ENCODE measurements at regions of chr3 and their contacts with region 1.

Region 1: GRCh38 chr3:143119009-143119914 is at the start of gene CHST2:
- H3K4me3 Mint-ChIP-seq: peak within 1 kb of the TSS; percentile 84
- H3K27ac Mint-ChIP-seq: peak within 1 kb of the TSS; percentile 80
- H3K4me1 Mint-ChIP-seq: peaks cover 29% of the 10 kb centered on the region
- H3K27me3 Mint-ChIP-seq: peaks cover 21% of the 10 kb centered on the region

Region 2: GRCh38 chr3:142866841-142867631 is 252.2 kb before region 1 on chr3:
- intact Hi-C with region 1: no loop called
- H3K4me3 Mint-ChIP-seq: no peak overlapping the region
- H3K27ac Mint-ChIP-seq: no peak overlapping the region
- H3K4me1 Mint-ChIP-seq: peaks cover 18% of the 10 kb centered on the region
- H3K27me3 Mint-ChIP-seq: no peaks in the 10 kb centered on the region

Region 3: DNA sequence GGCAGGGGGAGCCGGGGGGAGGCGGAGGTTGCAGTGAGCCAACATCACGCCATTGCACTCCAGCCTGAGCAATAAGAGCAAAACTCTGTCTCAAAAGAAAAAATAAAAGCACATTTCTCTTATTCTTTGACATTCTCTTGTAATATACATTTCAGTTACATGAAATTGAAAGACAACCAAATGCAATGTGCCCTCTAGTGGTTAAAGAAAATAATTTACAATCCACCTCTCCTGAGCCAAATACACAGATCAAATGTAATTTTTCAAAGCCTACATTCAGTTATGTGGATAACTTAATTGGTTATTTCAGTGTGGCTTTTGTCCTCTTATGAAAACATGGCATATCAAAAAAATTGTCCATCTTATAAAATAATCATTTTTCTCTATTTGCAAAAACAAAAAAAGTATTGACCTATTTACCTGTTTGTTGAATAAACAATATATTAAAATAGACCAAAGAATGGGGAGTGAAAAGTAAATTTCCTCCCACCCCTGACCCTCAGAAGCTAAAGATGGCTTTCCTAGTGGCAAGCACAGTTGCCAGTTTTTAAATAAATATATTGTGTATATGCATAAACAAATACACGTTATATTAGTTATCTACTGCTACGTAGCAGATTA is 132.1 kb before region 1 on chr3:
- intact Hi-C with region 1: no loop called
- H3K4me3 Mint-ChIP-seq: no peak overlapping the region
- H3K27ac Mint-ChIP-seq: no peak overlapping the region
- H3K4me1 Mint-ChIP-seq: no peaks in the 10 kb centered on the region
- H3K27me3 Mint-ChIP-seq: no peaks in the 10 kb centered on the region

Region 4: DNA sequence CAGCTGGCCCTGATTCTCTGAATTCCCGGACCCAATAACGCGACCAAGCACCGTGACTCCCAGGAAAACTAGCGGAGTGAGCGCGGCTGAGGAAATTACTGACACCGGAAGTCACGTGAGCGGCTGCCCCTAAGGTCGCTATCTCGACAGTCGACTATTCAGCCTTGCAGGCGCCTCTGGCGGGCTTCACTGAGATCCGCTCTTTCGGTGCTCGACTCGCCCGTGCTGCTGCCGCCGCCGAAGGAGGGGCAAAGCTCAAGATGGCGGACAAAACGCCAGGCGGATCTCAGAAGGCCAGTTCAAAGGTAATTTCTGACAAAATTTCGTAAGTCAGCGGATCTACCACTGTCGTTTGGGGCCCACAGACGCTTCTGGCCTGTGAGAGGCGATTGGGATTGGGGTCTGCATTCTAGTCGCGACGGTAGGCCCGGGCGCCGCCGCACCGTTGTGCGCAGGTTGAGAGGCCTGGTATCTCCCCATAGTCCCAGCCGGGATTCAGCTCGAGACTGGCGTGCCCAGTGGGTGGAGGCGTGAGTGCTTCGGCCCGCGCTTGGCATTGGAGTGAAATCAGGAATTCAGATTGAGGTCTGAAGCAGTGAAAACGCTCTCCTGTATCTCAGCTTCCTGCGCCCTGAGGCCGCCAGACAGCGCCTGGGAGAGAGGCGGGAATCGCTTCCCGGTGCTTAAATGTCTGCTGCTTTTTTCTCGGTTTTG is 117.7 kb before region 1 on chr3 and contains the start of gene U2SURP:
- intact Hi-C with region 1: no loop called
- H3K4me3 Mint-ChIP-seq: peak within 1 kb of the TSS; percentile 81
- H3K27ac Mint-ChIP-seq: peak within 1 kb of the TSS; percentile 97
- H3K4me1 Mint-ChIP-seq: peaks cover 32% of the 10 kb centered on the region
- H3K27me3 Mint-ChIP-seq: no peaks in the 10 kb centered on the region

Region 5: GRCh38 chr3:143163562-143164100 is 44.4 kb after region 1 on chr3:
- intact Hi-C with region 1: loop called (anchors 5 kb)
- H3K4me3 Mint-ChIP-seq: no peak overlapping the region
- H3K27ac Mint-ChIP-seq: peak overlapping the region; percentile 82
- H3K4me1 Mint-ChIP-seq: peaks cover 50% of the 10 kb centered on the region
- H3K27me3 Mint-ChIP-seq: no peaks in the 10 kb centered on the region

Region 6: DNA sequence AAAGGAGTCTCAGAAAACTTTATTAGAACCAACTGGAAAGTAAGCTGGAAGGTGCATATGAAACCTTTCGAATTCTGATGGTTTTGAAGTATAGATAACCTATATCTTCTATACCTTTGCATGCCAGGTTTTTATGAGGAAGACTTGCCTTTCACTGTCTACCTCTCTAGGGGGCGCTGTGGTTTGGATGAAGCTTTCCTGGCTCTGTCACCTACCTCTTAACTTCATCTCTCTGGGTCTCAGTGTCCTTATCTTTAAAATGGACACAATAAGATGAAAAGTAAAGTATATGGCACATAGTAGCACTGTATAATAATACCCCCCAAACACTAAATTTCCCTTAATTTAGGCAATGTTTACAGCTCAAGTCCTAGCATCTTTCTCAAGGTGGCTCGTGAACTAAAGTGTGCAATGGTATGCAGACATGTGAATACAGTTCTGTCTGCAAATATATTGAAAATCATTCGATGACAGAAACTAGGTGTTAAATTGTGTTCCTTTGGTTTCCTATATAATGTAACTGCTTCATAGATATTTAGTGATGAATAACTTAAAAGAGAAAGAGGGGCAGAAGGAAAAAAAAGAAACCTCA is 314.6 kb after region 1 on chr3:
- intact Hi-C with region 1: loop called (anchors 10 kb)
- H3K4me3 Mint-ChIP-seq: no peak overlapping the region
- H3K27ac Mint-ChIP-seq: no peak overlapping the region
- H3K4me1 Mint-ChIP-seq: peaks cover 26% of the 10 kb centered on the region
- H3K27me3 Mint-ChIP-seq: no peaks in the 10 kb centered on the region

Region 7: GRCh38 chr3:143644370-143645089 is 525.3 kb after region 1 on chr3:
- intact Hi-C with region 1: loop called (anchors 5 kb)
- H3K4me3 Mint-ChIP-seq: no peak overlapping the region
- H3K27ac Mint-ChIP-seq: no peak overlapping the region
- H3K4me1 Mint-ChIP-seq: peaks cover 5% of the 10 kb centered on the region
- H3K27me3 Mint-ChIP-seq: no peaks in the 10 kb centered on the region

Region 8: DNA sequence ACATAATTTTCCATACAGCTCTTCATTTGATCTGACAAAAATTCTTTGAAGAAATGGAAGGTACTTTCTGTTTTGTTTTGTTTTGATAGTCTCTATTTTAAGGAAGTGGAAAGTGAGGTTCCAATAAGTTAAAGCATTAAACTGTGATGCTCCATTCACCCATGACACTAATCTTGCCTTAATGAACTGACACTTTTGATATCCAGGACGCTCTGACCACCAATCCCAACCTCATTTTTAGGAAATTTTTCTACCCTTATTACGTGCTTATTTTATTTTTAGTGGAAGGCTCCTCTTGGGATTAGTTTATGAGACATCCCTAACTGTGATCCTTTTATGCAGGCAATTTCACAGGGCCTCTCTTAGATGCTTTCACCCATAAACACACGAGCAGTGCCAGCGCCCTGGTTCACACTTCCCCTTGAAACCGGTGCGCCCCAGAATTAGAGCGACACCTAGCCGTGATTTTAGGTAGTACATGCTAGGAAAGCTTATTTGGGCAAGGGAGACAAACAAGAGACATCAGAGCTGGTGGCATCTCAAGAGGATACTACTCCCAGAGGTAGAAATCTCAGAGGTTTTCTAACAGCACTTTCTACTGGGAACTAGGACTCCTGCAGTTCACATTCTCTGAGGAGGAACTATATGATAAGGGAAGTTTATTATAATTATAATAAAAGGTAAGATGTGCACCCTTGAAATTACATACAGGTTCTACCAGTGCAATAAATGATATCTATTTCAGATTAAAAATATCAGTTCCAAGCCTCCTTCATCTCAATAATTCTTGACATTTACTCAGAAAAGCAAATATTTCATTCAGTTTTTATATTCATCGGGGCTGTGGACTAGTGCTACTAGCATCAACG is 555.1 kb after region 1 on chr3:
- intact Hi-C with region 1: loop called (anchors 5 kb)
- H3K4me3 Mint-ChIP-seq: no peak overlapping the region
- H3K27ac Mint-ChIP-seq: no peak overlapping the region
- H3K4me1 Mint-ChIP-seq: peaks cover 5% of the 10 kb centered on the region
- H3K27me3 Mint-ChIP-seq: no peaks in the 10 kb centered on the region

Measured in dendritic cell treated with granulocyte-macrophage colony-stimulating factor and Interleukin-4, amounts not matched to agents 40 ng/mL and 50 ng/mL, for 4 days (primary cell).